Activated CD4-positive, alpha-beta memory T cell treated with anti-CD3 and anti-CD28 coated beads, Interleukin-2, amount 10 ng/mL, durations not matched to agents 7 days and 5 days (primary cell): ENCODE measurements at regions of chr9 and their contacts with region 1.

Region 1: GRCh38 chr9:6024020-6024554 is 8.7 kb upstream of the RANBP6 start:
- DNase-seq: peak; percentile 27
- H3K4me3 Mint-ChIP-seq: peak overlapping the region; percentile 24
- H3K27ac Mint-ChIP-seq: no peak overlapping the region
- H3K4me1 Mint-ChIP-seq: peaks cover 7% of the 10 kb centered on the region
- H3K27me3 Mint-ChIP-seq: peaks cover 18% of the 10 kb centered on the region

Region 2: GRCh38 chr9:5529683-5530221 is 494.3 kb before region 1 on chr9:
- CTCF ChIA-PET with region 1: no interaction called
- POLR2A ChIA-PET with region 1: no interaction called
- DNase-seq: no peak
- H3K4me3 Mint-ChIP-seq: no peak overlapping the region
- H3K27ac Mint-ChIP-seq: no peak overlapping the region
- H3K4me1 Mint-ChIP-seq: peaks cover 21% of the 10 kb centered on the region
- H3K27me3 Mint-ChIP-seq: no peaks in the 10 kb centered on the region

Region 3: GRCh38 chr9:5644501-5644900 is 379.6 kb before region 1 on chr9:
- CTCF ChIA-PET with region 1: no interaction called
- POLR2A ChIA-PET with region 1: no interaction called
- DNase-seq: no peak
- H3K4me3 Mint-ChIP-seq: no peak overlapping the region
- H3K27ac Mint-ChIP-seq: no peak overlapping the region
- H3K4me1 Mint-ChIP-seq: peaks cover 20% of the 10 kb centered on the region
- H3K27me3 Mint-ChIP-seq: no peaks in the 10 kb centered on the region

Region 4: DNA sequence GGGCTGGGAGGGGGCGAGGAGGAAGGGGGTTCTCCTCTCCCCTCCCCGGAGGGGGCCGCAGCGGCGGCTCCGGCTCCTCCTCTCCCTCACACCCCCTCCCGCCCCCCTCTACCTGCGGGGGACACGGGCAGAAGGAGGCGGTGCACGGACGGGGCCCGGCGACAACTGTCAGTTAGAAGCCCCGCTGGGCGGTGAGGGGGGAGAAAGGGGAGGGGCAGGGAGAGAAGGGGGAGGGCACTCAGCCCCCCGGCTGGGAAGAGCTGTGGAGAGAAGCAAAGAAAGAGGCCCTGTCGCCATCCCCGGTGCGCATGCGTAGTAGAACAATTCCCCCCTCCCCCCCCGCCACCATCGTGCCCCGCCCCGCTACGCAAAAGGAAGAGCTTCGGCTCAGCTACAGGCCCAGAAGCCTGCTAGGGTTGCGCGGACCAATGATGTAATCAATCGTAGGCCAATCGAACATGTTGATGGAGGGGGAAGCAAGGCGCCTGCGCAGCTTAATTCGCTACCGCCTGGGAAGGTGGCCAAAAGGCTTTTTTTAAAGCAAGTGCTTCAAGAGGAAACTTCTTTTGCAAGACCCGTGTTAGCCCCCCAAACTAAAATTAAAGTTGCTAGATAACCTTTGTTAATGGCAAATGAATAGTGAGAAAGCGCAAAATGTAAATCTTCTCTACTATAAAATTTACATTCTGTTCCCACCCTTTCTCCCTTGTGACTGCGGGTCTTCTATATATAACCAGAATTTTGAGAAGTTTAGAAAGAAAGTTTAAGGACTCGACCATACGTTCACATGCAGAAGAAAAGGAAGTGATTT is 15.7 kb before region 1 on chr9:
- CTCF ChIA-PET with region 1: interaction called, 12 read pairs
- POLR2A ChIA-PET with region 1: interaction called, 9 read pairs
- DNase-seq: peak; percentile 95
- H3K4me3 Mint-ChIP-seq: peak overlapping the region; percentile 74
- H3K27ac Mint-ChIP-seq: peak overlapping the region; percentile 78
- H3K4me1 Mint-ChIP-seq: peaks cover 73% of the 10 kb centered on the region
- H3K27me3 Mint-ChIP-seq: no peaks in the 10 kb centered on the region

Region 5: DNA sequence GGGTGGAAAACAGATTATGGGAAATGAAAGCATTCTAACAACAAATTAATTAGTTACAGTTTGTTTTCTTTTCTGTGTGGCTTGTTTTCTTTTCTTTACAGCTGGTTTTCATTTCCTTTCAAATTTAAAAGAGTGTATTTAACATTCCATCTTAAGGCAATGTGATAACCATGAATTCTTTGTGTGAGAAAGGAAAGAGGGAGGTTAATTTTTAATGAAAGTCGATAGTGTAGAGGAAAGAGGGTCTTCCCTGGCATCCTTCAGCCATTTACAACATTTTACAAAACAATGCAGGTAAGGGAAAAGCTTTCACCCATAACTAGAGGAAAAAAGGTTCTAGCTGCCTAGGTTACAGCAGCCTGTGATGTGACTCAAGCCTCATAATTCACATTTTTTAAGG is 147.6 kb after region 1 on chr9:
- CTCF ChIA-PET with region 1: no interaction called
- POLR2A ChIA-PET with region 1: no interaction called
- DNase-seq: no peak
- H3K4me3 Mint-ChIP-seq: no peak overlapping the region
- H3K27ac Mint-ChIP-seq: no peak overlapping the region
- H3K4me1 Mint-ChIP-seq: no peaks in the 10 kb centered on the region
- H3K27me3 Mint-ChIP-seq: peaks cover 3% of the 10 kb centered on the region

Region 6: DNA sequence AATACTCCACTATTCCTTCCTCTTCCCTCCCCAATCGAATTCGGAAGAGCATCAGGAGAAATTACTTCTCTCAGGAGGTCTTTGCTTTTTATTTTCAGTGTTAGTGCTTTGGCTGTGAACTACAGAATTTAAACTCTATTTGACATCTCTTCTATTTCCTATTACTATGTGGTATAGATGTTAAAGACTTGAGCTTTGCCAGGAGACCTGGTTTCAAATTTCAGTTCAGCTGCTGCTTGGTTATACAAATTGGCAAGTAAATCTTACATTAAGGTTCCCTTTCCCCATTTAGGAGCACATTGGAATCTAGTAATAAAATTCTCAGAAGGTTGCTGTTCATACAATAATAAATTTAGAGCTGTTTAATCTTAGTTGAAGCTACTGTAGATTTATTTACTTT is 402.0 kb after region 1 on chr9:
- CTCF ChIA-PET with region 1: no interaction called
- POLR2A ChIA-PET with region 1: no interaction called
- DNase-seq: no peak
- H3K4me3 Mint-ChIP-seq: no peak overlapping the region
- H3K27ac Mint-ChIP-seq: no peak overlapping the region
- H3K4me1 Mint-ChIP-seq: peaks cover 69% of the 10 kb centered on the region
- H3K27me3 Mint-ChIP-seq: no peaks in the 10 kb centered on the region